HEK293 (cell line): ENCODE measurements at regions of chr22 and their contacts with region 1.

Region 1: DNA sequence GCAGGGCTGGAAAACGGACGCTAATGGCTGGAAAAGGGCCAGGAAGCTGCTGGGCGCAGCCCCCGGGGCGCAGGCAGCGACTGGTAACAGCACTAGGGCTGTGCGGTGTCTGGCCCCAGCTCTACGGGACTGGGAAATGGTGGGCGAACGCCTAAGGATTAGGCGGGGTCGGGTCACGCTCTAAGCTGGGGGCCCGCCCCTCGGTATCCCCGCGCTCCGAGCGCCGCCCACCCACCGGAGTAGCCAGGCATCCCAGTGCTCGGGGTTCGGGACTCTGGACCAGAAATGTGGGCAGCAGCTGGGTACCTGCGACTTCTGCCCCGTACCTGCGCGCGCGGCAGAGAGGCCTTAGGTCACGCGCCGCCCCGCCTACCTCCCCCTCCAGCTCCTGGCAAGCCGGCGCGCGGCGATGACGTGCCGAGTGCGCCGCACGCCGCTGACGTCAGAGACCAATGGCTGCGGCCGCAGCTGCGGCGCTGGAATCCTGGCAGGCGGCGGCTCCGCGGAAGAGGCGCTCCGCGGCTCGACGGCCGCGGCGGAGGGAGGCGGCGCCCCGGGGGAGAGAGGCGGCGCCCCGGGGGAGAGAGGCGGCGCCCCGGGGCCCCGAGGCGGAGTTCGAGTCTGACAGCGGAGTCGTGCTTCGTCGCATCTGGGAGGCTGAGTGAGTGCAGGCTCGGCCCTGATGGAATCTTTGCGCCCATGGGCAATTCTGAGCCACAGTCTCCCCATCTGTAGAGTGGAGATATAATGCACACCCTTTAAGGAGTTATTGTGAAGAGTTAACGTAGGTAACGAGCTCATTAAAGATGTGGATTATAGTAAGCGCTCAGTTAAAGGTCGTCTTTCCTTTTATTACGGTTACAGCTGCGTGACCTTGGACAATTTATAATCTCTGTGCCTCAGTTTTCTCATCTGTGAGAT is at the starts of genes HPS4 and SRRD:
- H3K4me3 ChIP-seq: peak within 1 kb of the TSS; percentile 93
- H3K27ac ChIP-seq: peak within 1 kb of the TSS; percentile 44; the same call in 1 of the 2 replicates
- H3K4me1 ChIP-seq: peaks cover 4% of the 10 kb centered on the region; the same call in 1 of the 2 replicates
- CTCF ChIP-seq: no peak

Region 2: GRCh38 chr22:26416670-26417250 is 66.9 kb before region 1 on chr22:
- CTCF ChIA-PET with region 1: no interaction called
- POLR2A ChIA-PET with region 1: interaction called, 10 read pairs
- H3K4me3 ChIP-seq: 0 out of 2 replicates have a peak overlapping the region, but pooled peaks have one; percentile 2
- H3K27ac ChIP-seq: no peak overlapping the region
- H3K4me1 ChIP-seq: no peaks in the 10 kb centered on the region
- CTCF ChIP-seq: no peak

Region 3: GRCh38 chr22:26450453-26451185 is 33.1 kb before region 1 on chr22:
- CTCF ChIA-PET with region 1: no interaction called
- POLR2A ChIA-PET with region 1: no interaction called
- H3K4me3 ChIP-seq: no peak overlapping the region
- H3K27ac ChIP-seq: no peak overlapping the region
- H3K4me1 ChIP-seq: no peaks in the 10 kb centered on the region
- CTCF ChIP-seq: no peak

Region 4: GRCh38 chr22:26471522-26471921 is 12.2 kb before region 1 on chr22:
- CTCF ChIA-PET with region 1: interaction called, 4 read pairs
- POLR2A ChIA-PET with region 1: interaction called, 27 read pairs
- H3K4me3 ChIP-seq: no peak overlapping the region
- H3K27ac ChIP-seq: no peak overlapping the region
- H3K4me1 ChIP-seq: no peaks in the 10 kb centered on the region
- CTCF ChIP-seq: no peak

Region 5: DNA sequence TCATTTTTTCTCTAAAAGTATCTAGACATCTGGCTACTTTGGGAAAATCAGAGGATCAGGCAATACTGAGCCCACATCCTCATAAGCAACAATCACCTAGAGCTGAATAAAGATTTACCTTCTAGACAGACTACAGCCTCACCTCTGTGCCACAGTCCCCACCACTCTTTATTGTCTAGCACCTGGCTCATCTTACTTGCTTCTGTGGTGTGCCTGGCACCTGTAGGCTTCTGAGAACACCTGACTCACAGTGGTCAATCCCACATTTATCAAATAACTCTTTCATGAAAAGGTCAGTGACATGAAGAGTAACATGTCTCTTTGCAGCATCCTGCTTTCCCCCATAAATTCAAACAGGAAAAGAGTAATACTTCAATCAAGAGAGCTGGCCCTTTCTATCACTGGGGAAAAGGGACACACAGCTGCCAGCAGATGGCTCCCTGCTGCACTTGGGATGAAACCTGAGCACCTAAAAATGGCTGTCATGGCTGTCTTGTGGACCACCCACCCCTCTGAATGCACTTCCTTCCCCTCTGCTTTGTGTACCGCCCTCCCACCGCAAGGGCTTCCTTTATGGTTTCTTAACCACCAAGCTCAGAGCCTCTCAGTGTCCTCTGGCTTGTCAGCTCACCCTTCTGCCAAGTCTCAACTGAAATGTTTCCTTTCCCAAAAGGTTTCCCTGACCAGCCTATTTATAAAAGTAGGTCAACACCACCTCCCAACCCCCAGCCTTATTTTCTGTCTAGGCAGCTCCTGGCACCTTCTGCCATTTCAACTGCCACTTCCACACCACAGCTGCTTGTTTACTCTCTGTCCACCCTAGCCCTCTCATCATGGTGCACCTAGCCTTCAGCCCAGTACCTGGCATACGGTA is 19.2 kb after region 1 on chr22:
- CTCF ChIA-PET with region 1: interaction called, 12 read pairs
- POLR2A ChIA-PET with region 1: interaction called, 6 read pairs
- H3K4me3 ChIP-seq: no peak overlapping the region
- H3K27ac ChIP-seq: no peak overlapping the region
- H3K4me1 ChIP-seq: no peaks in the 10 kb centered on the region
- CTCF ChIP-seq: peak; percentile 38; the same call in 1 of the 2 replicates

Region 6: DNA sequence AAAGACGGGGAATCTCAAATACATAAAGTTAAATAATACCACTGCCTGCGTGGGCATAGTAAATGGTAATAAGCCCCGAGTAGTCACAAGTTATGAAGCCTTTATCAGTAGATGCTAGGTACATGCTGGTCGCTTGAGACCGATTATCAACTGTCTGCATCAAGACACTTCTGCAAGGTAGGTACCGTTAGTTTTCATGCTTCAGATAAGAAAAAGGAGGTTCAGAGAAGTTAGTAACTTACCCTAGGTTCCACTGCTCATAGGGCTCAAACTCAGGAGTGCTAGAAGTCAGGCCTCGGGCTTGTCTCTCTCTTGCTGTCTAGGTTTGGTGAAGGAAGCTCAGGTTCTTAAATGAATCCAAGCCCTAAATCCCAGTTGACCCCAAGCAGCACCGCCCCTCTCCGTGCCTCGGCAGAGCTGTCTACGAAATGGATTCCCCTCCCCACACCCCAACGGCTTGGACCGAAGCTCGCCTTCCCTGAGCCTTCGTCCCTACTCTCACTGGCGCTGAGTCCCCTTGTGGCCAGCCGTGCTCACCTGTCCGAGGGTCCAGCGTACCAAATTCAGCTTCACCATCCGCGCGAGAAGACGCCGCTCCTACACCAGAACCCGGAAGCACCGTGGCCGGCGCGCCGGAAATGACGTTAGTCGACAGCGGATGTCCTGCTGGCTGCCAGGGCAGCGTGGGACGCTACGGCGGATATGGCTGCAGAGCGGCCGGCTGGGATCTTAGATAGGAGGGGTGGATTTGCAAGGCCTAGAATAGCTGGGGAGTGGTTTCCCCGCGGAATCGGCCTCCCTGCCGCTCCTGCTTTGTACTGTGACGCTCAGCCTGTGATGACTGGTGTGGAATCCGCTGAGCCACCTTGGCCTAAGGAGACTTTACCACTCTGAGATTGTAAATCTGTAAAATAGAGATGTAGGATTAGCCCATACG is 28.4 kb after region 1 on chr22 and contains the start of gene TFIP11:
- CTCF ChIA-PET with region 1: no interaction called
- POLR2A ChIA-PET with region 1: interaction called, 13 read pairs
- H3K4me3 ChIP-seq: peak within 1 kb of the TSS; percentile 80
- H3K27ac ChIP-seq: peak within 1 kb of the TSS; percentile 56; the same call in 1 of the 2 replicates
- H3K4me1 ChIP-seq: no peaks in the 10 kb centered on the region
- CTCF ChIP-seq: peak; percentile 88

Region 7: GRCh38 chr22:26524870-26525269 is 41.2 kb after region 1 on chr22:
- CTCF ChIA-PET with region 1: no interaction called
- POLR2A ChIA-PET with region 1: no interaction called
- H3K4me3 ChIP-seq: no peak overlapping the region
- H3K27ac ChIP-seq: no peak overlapping the region
- H3K4me1 ChIP-seq: no peaks in the 10 kb centered on the region
- CTCF ChIP-seq: no peak

Region 8: DNA sequence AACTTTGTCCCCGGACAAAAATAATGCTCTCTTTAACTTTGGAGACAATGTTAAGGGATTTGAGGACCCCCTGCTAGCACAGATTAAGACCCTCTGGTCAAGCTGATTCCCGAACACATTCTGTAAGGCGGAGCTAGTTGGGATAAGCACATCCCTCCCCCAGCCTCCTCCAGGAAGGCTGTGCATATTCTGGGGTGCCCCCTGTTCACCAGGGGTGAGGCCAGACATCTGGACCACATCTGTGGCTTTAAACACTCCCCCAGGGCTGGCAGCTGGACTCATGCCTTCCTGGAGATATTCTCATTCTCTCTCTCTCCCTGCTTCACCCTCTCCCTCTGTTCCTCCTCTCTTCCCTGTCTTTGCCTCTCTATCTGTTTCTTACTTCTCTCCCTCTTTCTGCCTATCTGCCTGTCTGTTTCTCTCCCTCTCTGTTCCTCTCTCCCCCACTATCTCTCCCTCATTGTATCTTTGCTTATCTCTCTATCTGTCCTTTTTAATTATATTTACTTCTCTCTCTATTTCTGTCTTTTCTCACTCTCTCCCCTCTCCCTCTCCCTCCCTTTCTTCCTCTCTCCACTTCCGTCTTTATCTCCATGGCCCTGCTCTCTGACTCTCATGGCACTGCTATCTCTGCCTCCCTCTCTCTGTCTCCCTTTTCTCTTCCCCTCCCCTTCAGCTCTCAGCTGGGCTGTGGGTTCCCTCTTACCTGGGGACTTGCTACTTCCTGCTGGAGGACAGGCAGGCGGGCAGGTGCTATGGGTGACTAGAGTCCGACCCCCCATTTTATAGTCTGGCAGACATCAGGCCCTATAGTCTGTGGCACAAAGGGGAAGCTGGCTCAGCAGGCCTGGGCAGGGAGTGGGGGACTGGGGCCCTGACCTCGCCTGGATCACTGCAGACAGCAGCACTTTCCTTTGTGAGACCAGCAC is 133.8 kb after region 1 on chr22 and contains the start of gene CRYBB1:
- CTCF ChIA-PET with region 1: no interaction called
- POLR2A ChIA-PET with region 1: no interaction called
- H3K4me3 ChIP-seq: no peak within 1 kb of the TSS
- H3K27ac ChIP-seq: no peak within 1 kb of the TSS
- H3K4me1 ChIP-seq: no peaks in the 10 kb centered on the region
- CTCF ChIP-seq: no peak